Activated CD8-positive, alpha-beta T cell treated with anti-CD3 and anti-CD28 coated beads for 36 hours (primary cell): ENCODE measurements at regions of chr12 and their contacts with region 1.

Region 1: DNA sequence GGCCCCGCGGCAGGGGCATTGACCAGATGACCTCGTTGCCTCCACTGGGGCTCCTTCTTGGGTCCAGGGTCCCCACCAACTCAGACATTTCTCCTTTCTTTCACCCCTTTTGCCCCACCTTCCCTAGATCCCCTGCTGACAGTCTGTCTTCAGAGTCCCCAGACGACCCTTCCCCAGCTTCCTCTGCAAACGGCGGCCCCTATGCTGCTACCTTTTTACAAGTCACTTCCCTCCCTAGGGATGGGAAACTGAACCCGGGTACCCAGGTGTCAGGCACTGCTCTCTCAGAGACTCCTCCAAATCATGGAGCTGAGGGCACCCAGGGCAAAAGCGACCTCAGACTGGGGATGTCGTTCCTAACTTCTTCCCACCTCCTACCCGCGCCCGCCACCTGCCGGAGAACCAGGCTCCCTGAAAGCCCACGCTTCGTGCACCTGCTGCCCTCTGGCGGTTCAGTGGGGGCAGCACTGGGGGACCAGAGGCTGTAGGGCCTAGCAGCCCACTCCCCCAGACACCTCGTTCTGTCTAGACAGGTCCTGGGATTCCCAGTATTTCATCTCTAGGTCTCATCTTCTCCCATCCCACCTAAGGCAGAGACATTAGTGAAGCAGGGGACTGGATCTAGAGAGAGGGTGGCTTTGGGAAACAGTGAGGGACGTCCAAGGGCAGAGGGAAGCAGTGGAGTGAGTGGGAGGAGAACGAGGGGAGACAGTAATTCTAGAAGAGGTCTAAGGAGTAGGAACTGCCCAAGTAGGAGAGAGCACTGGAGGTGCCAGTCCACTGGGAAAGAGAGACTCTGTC is 4.9 kb downstream of the ZNF385A start:
- DNase-seq: peak; percentile 93
- ATAC-seq: peak; percentile 94
- H3K4me3 Mint-ChIP-seq: peak overlapping the region; percentile 42
- H3K27ac Mint-ChIP-seq: no peak overlapping the region
- H3K4me1 Mint-ChIP-seq: peaks cover 11% of the 10 kb centered on the region
- H3K27me3 Mint-ChIP-seq: no peaks in the 10 kb centered on the region
- CTCF ChIP-seq: peak; percentile 100

Region 2: GRCh38 chr12:54214553-54215406 is 164.8 kb before region 1 on chr12:
- CTCF ChIA-PET with region 1: interaction called, 30 read pairs
- POLR2A ChIA-PET with region 1: interaction called, 4 read pairs
- intact Hi-C with region 1: no loop called
- DNase-seq: peak; percentile 95
- ATAC-seq: peak; percentile 88
- H3K4me3 Mint-ChIP-seq: peak overlapping the region; percentile 76
- H3K27ac Mint-ChIP-seq: no peak overlapping the region
- H3K4me1 Mint-ChIP-seq: peaks cover 21% of the 10 kb centered on the region
- H3K27me3 Mint-ChIP-seq: peaks cover 20% of the 10 kb centered on the region
- CTCF ChIP-seq: peak; percentile 100

Region 3: DNA sequence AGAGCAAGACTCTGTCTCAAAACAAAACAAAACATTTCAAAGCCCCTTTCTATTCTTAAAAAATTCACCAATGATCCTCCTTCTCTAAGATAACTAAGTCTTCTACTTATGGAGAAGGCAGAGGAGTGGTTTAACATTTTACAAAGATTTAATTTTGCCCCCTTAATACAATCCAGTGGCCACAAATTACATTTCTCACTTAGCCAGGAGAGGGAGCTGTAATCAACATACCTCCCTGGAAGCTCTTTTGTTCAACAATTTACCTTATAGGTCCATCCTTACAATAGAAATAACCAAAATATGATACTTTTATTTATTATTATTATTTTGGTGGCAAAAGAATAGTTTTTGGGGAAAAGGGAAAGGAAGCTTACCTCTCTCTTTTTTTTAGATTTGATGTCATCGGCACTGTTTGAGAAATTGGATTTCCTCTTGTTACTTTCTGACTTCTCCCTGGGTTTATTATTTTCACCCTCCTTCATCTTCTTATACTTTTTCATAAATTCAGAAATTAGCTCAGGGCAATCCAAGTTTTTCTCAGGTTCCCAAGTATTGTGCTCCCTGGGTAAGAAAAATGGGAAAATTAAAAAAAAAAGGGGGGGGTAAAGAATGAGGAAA is 127.8 kb before region 1 on chr12:
- CTCF ChIA-PET with region 1: interaction called, 22 read pairs
- POLR2A ChIA-PET with region 1: no interaction called
- intact Hi-C with region 1: no loop called
- DNase-seq: peak; percentile 22
- ATAC-seq: peak; percentile 62
- H3K4me3 Mint-ChIP-seq: no peak overlapping the region
- H3K27ac Mint-ChIP-seq: no peak overlapping the region
- H3K4me1 Mint-ChIP-seq: peaks cover 11% of the 10 kb centered on the region
- H3K27me3 Mint-ChIP-seq: no peaks in the 10 kb centered on the region
- CTCF ChIP-seq: peak; percentile 49

Region 4: GRCh38 chr12:54324617-54325441 is 54.8 kb before region 1 on chr12 and contains the start of gene COPZ1:
- CTCF ChIA-PET with region 1: interaction called, 15 read pairs
- POLR2A ChIA-PET with region 1: interaction called, 5 read pairs
- intact Hi-C with region 1: no loop called
- DNase-seq: peak; percentile 98
- ATAC-seq: peak; percentile 99
- H3K4me3 Mint-ChIP-seq: peak within 1 kb of the TSS; percentile 98
- H3K27ac Mint-ChIP-seq: peak within 1 kb of the TSS; percentile 94
- H3K4me1 Mint-ChIP-seq: peaks cover 28% of the 10 kb centered on the region
- H3K27me3 Mint-ChIP-seq: no peaks in the 10 kb centered on the region
- CTCF ChIP-seq: peak; percentile 65
- total RNA-seq, gene COPZ1: 75.8 to 78.4 TPM

Region 5: DNA sequence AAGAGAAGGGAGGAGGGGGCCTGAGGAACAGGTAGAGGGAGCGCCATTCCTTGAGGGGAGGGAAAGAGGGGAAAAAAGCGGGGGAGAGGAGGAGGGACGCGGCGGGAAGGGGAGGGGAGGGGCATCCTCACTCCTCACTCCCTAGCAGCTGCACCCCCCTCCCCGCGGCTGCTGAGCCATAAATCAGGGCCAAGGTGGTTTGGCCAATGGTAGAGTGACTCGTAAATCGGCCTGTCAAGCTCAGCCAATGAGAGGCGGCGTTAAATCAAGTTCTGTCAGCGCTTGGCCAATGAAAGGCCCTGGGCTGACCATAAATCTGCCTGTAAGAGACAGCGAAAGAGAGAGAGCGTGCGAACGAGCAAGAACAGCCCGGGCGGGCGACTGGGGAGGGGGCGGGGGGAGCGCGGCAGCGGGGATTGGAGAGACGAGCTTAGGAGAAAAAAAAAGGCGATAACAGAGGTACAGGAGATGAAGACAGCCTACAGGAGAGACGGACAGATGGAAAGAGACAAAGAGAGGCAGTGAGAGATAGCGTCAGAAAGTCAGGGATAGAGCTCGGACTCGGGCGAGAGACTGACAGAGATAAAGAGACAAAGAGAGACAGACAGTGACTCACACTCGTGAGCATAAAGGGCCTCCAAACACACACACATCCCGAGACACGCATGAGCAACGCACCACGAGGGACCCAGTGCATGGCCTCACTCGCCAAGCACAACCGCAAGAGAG is 20.4 kb before region 1 on chr12:
- CTCF ChIA-PET with region 1: interaction called, 47 read pairs
- POLR2A ChIA-PET with region 1: interaction called, 5 read pairs
- intact Hi-C with region 1: no loop called
- DNase-seq: peak; percentile 97
- ATAC-seq: peak; percentile 93
- H3K4me3 Mint-ChIP-seq: no peak overlapping the region
- H3K27ac Mint-ChIP-seq: no peak overlapping the region
- H3K4me1 Mint-ChIP-seq: peaks cover 17% of the 10 kb centered on the region
- H3K27me3 Mint-ChIP-seq: no peaks in the 10 kb centered on the region
- CTCF ChIP-seq: no peak

Region 6: DNA sequence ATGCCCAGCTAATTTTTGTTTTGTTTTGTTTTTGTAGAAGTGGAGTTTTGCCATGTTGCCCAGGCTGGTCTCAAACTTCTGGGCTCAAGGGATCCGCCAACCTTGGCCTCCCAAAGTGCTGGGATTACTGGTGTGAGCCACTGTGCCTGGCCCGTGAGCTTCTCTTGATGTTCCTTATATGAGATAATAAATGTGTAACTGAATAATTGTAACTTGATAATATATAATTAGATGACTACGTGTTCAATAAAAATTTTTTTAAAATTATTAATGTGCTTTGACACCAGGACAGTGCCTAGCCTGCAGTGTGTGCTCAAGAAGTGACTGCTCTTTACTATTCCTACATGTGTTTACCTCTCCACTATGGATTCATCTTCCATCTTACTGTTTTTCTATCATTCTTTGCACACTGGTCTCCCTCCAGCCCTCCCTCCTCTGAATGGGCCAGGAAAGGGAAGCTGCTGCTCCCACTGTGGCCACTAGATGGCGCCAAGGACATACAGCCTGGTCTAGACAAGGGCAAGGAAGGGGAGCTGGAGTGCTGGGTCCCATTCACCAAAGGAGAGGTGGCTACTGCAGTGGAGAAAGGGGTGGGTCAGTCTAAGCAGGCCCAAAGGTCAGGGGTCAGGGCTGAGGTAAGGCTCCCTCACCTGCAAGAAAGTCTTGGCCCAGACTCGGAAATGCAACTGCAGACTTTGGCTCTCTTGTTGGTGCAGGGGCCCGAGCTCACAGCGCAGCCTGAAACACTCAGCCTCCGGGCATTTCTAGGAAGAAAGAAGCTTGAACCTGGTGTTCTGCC is 19.6 kb after region 1 on chr12:
- CTCF ChIA-PET with region 1: interaction called, 74 read pairs
- POLR2A ChIA-PET with region 1: no interaction called
- intact Hi-C with region 1: no loop called
- DNase-seq: peak; percentile 93
- ATAC-seq: peak; percentile 97
- H3K4me3 Mint-ChIP-seq: no peak overlapping the region
- H3K27ac Mint-ChIP-seq: no peak overlapping the region
- H3K4me1 Mint-ChIP-seq: peaks cover 5% of the 10 kb centered on the region
- H3K27me3 Mint-ChIP-seq: no peaks in the 10 kb centered on the region
- CTCF ChIP-seq: peak; percentile 92

Region 7: DNA sequence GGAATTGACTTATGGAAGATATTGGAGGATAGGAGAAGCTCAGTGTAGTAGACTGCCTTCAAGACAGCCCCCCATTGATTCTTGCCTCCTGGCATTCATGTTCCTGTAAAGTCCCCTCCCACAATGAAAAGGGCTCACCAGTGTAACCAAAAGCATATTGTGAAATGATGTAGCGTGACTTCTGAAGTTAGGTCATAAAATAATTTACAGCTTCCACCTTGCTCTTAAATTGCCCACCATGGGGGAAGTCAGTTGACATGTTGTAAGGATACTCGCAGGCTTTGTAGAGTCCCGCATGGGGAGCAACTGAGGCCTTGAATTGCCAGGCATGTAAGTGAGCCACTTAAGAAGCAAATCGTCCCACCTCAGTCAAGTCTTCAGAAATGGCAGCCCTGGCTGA is 68.7 kb after region 1 on chr12:
- CTCF ChIA-PET with region 1: interaction called, 13 read pairs
- POLR2A ChIA-PET with region 1: no interaction called
- intact Hi-C with region 1: no loop called
- DNase-seq: no peak
- ATAC-seq: no peak
- H3K4me3 Mint-ChIP-seq: no peak overlapping the region
- H3K27ac Mint-ChIP-seq: no peak overlapping the region
- H3K4me1 Mint-ChIP-seq: no peaks in the 10 kb centered on the region
- H3K27me3 Mint-ChIP-seq: peaks cover 2% of the 10 kb centered on the region
- CTCF ChIP-seq: no peak